ENCODE measurements at regions of chr20 and their contacts with region 1.

Region 1: GRCh38 chr20:59207742-59208357 is 44.2 kb downstream of the ZNF831 start:
- DNase-seq: peak; percentile 93
- H3K4me3 Mint-ChIP-seq: no peak overlapping the region
- H3K27ac Mint-ChIP-seq: no peak overlapping the region
- H3K4me1 Mint-ChIP-seq: peaks cover 4% of the 10 kb centered on the region
- H3K27me3 Mint-ChIP-seq: no peaks in the 10 kb centered on the region

Region 2: DNA sequence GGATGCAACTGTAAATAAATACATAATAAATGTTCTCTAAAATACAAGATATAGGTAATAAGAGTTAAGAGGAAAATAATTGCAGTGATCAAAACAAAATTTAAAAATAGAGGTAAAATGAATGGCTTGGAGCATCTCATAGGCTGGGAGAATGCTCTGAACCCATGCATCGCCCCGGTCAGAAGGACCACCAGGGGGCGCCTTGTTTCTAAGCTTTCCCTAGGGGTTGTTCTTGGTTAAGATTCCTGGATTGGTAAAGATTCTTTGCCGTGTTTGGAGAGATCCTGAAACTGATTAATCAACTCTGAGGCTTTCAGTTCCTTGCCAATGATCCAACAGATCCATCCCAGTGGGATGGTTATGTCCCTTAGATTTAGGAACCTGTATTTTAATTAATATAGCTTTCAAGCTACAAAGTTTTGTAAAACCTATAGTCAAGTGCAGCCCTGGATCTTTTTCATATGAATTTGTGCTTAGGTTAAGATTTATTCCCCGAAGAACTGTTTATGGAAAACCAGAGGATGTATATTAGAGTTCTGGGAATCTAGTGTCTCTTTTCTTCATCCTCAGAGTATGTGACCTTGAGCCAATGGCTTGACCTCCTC is 119.9 kb before region 1 on chr20:
- intact Hi-C with region 1: loop called (anchors 1 kb)
- DNase-seq: peak; percentile 94
- H3K4me3 Mint-ChIP-seq: no peak overlapping the region
- H3K27ac Mint-ChIP-seq: no peak overlapping the region
- H3K4me1 Mint-ChIP-seq: no peaks in the 10 kb centered on the region
- H3K27me3 Mint-ChIP-seq: peaks cover 39% of the 10 kb centered on the region